Activated CD4-positive, alpha-beta memory T cell treated with anti-CD3 and anti-CD28 coated beads, Interleukin-2, amount 10 ng/mL, durations not matched to agents 7 days and 5 days (primary cell): ENCODE measurements at regions of chr6 and their contacts with region 1.

Region 1: GRCh38 chr6:6676910-6677441 is 88.5 kb downstream of the LY86 start:
- DNase-seq: peak; percentile 86
- H3K4me3 Mint-ChIP-seq: no peak overlapping the region
- H3K27ac Mint-ChIP-seq: peak overlapping the region; percentile 23
- H3K4me1 Mint-ChIP-seq: peaks cover 31% of the 10 kb centered on the region
- H3K27me3 Mint-ChIP-seq: peaks cover 11% of the 10 kb centered on the region

Region 2: GRCh38 chr6:6525933-6526332 is 151.0 kb before region 1 on chr6:
- CTCF ChIA-PET with region 1: no interaction called
- POLR2A ChIA-PET with region 1: no interaction called
- DNase-seq: no peak
- H3K4me3 Mint-ChIP-seq: no peak overlapping the region
- H3K27ac Mint-ChIP-seq: no peak overlapping the region
- H3K4me1 Mint-ChIP-seq: no peaks in the 10 kb centered on the region
- H3K27me3 Mint-ChIP-seq: peaks cover 72% of the 10 kb centered on the region

Region 3: DNA sequence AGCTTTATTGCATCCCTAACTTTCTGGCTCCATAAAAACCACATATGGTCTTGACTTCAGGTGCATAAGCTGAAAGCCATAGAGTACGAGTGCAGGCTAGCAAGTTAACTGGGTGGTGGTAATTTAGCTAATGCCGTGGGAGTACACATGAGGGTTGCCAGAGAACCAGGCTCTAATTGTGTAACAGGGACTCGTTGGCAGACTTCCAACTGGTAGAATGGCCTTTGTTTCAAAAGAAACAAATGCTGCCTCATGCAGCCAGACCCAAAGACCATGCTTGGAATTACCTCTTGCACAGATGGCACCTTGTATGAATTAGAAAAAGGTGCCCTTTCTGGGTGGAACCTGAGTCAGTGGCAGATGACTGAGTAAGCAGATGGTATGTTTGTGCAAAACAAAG is 15.3 kb before region 1 on chr6:
- CTCF ChIA-PET with region 1: interaction called, 21 read pairs
- POLR2A ChIA-PET with region 1: interaction called, 5 read pairs
- DNase-seq: no peak
- H3K4me3 Mint-ChIP-seq: no peak overlapping the region
- H3K27ac Mint-ChIP-seq: no peak overlapping the region
- H3K4me1 Mint-ChIP-seq: peaks cover 62% of the 10 kb centered on the region
- H3K27me3 Mint-ChIP-seq: peaks cover 8% of the 10 kb centered on the region

Region 4: GRCh38 chr6:6960571-6961251 is 283.7 kb after region 1 on chr6:
- CTCF ChIA-PET with region 1: no interaction called
- POLR2A ChIA-PET with region 1: no interaction called
- DNase-seq: no peak
- H3K4me3 Mint-ChIP-seq: no peak overlapping the region
- H3K27ac Mint-ChIP-seq: no peak overlapping the region
- H3K4me1 Mint-ChIP-seq: no peaks in the 10 kb centered on the region
- H3K27me3 Mint-ChIP-seq: peaks cover 11% of the 10 kb centered on the region

Region 5: DNA sequence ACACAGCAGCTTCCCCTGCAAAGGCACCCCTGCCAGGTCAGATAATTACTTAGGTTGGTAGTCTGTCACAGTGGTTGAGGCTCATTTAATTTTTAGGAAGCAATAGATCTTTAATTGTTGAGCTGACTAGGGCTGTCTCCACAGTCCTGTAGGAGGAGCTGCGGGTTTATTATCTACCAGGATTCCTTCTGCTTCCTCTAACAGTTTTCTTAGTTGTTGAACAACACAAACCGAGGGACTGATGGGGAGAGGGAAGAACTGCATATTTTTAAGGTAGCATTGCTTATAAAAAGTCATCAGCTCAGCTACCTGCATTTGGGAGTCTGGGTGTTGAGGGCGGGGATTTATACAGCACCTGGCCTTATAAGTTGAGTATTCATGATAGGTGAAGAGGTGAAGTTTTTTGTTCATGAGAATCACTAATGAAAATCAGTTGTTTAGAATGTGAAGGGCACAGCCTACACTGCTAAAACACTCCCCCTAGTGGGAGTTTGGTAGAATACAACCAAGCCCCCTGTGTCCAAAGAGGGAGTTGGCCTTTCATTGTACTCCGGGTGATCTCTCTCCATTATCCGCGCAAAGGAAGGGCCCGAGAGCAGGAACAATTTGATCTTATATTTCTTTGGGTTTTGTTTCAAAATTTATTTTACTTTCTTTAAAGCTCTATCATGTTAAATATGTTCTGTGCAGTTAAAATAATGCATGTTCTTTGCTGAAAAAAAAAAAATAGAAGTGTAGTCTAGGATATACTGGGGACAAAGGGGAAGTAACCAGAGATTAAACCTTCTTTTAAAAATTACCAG is 566.4 kb after region 1 on chr6:
- CTCF ChIA-PET with region 1: interaction called, 14 read pairs
- POLR2A ChIA-PET with region 1: no interaction called
- DNase-seq: peak; percentile 47
- H3K4me3 Mint-ChIP-seq: no peak overlapping the region
- H3K27ac Mint-ChIP-seq: no peak overlapping the region
- H3K4me1 Mint-ChIP-seq: peaks cover 12% of the 10 kb centered on the region
- H3K27me3 Mint-ChIP-seq: no peaks in the 10 kb centered on the region